ENCODE measurements at regions of chr9 and their contacts with region 1.

Region 1: GRCh38 chr9:128103589-128103962 is 24.0 kb downstream of the PTGES2 start:
- DNase-seq: no peak
- ATAC-seq: peak; percentile 12 to 30; a peak in 2 of 6 replicates
- H3K4me3 ChIP-seq: no peak overlapping the region
- H3K27ac ChIP-seq: no peak overlapping the region
- H3K4me1 ChIP-seq: peaks cover 21% of the 10 kb centered on the region
- CTCF ChIP-seq: peak; percentile 2; the same call in 1 of the 3 replicates
- EP300 ChIP-seq: no peak
- POLR2A ChIP-seq: no peak
- RAD21 ChIP-seq: peak; percentile 17 to 24; a peak in 1 of 5 replicates

Region 2: GRCh38 chr9:128088253-128088945 is 15.2 kb before region 1 on chr9:
- CTCF ChIA-PET with region 1: interaction called, 11 read pairs
- POLR2A ChIA-PET with region 1: interaction called, 4 read pairs
- DNase-seq: no peak
- ATAC-seq: no peak
- H3K4me3 ChIP-seq: no peak overlapping the region
- H3K27ac ChIP-seq: no peak overlapping the region
- H3K4me1 ChIP-seq: peaks cover 7% of the 10 kb centered on the region; the same call in 2 of the 3 replicates
- CTCF ChIP-seq: no peak
- EP300 ChIP-seq: no peak
- POLR2A ChIP-seq: no peak
- RAD21 ChIP-seq: no peak

Region 3: DNA sequence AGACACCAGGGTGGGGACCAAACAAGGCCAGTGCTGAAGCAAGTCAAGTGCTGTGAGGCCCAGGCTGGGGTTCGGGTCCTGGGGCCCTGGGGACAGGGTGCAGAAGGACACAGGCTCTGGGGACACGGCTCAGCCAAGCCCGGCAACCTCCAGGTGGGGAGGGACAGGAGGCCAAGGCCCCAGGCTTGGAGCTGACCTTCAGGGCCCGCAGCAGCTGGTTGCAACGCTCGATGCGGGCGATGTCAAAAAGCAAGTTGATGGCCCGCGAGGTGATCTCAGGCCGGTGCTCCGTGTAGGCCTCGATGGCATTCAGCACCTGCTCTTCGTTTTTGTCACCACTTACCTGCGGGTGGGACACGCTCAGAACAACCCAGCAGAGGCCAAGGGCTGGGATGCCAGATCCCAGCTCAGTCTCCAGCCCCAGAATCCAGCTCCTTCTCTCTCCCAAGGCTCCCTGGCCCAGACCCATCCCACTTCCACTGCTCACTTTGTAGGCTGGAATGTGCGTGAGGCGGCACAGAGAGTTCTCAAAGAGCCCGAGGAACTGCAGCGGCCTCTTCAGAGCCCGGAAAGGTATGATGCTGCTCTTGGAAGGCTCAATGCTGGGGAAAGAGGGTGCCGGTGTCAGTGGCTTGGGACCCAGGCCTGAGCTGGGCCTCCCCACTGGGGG is 647.5 kb after region 1 on chr9:
- CTCF ChIA-PET with region 1: no interaction called
- POLR2A ChIA-PET with region 1: no interaction called
- DNase-seq: no peak
- ATAC-seq: no peak; a peak in 1 of 6 replicates
- H3K4me3 ChIP-seq: no peak overlapping the region
- H3K27ac ChIP-seq: no peak overlapping the region
- H3K4me1 ChIP-seq: no peaks in the 10 kb centered on the region
- CTCF ChIP-seq: no peak
- EP300 ChIP-seq: no peak
- POLR2A ChIP-seq: no peak
- RAD21 ChIP-seq: no peak

Measured in A549 (cell line).